Adrenal gland (tissue), 19 donors: ENCODE measurements at regions of chr2 and their contacts with region 1.

Region 1: GRCh38 chr2:68487773-68488355 is 20.5 kb downstream of the APLF start:
- DNase-seq: no peak
- H3K4me3 ChIP-seq: no peak overlapping the region
- H3K27ac ChIP-seq: no peak overlapping the region
- H3K4me1 ChIP-seq: peaks cover 0 to 10% of the 10 kb centered on the region in 2 donors
- H3K27me3 ChIP-seq: no peaks in the 10 kb centered on the region
- CTCF ChIP-seq: peak; percentile 27 to 70 (median 52)
- POLR2A ChIP-seq: no peak

Region 2: DNA sequence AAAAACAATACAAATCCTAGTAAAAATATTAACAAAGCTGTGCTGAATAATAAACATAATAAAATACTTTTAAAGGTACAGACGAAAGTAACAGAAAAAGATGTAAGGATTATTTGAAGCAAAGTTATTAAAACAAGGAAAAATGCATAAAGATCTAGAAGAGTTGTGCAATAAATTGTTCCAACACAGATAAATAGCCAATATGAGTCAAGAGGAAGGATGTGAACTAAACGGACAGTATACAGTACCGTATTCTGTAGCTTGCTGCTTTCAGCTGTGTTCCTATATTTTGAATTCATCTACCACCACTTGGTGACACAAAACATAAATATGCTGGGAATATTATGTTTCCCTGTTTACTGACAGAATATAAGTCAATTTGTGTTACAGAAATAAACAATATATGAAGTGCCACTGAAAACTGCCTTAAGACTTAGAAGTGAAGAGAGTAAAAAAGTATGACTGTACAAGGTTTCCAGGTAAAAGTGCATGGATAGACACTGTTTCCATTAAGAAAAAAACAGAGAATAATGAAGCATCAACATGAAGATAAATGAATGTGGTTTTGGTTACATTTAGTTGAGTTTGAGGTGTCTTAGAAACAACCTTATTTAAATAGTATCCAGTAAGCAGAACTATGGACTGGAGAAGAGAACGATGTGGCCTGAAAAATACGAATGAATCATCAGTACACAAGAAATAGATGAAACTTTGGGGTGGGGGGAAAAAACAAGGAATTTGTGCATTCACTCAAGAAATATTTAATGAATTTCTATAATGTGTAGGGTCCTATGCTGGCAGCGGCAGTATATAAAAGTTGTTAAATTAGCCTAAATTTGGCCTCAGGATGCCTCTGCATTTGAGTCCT is 248.7 kb before region 1 on chr2:
- intact Hi-C with region 1: no loop called
- DNase-seq: no peak
- H3K4me3 ChIP-seq: peak overlapping the region in 1 of 4 donors; percentile 11
- H3K27ac ChIP-seq: peak overlapping the region in 2 of 5 donors; percentile 14 to 15
- H3K4me1 ChIP-seq: peaks cover 32 to 90% of the 10 kb centered on the region in 2 donors
- H3K27me3 ChIP-seq: no peaks in the 10 kb centered on the region
- CTCF ChIP-seq: no peak
- POLR2A ChIP-seq: no peak

Region 3: GRCh38 chr2:68250652-68251186 is 237.1 kb before region 1 on chr2:
- intact Hi-C with region 1: no loop called
- DNase-seq: no peak
- H3K4me3 ChIP-seq: peak overlapping the region in 2 of 4 donors; percentile 44 to 96
- H3K27ac ChIP-seq: peak overlapping the region; percentile 85 to 100 (median 96)
- H3K4me1 ChIP-seq: peaks cover 32 to 61% of the 10 kb centered on the region in 2 donors
- H3K27me3 ChIP-seq: no peaks in the 10 kb centered on the region
- CTCF ChIP-seq: no peak
- POLR2A ChIP-seq: no peak

Region 4: DNA sequence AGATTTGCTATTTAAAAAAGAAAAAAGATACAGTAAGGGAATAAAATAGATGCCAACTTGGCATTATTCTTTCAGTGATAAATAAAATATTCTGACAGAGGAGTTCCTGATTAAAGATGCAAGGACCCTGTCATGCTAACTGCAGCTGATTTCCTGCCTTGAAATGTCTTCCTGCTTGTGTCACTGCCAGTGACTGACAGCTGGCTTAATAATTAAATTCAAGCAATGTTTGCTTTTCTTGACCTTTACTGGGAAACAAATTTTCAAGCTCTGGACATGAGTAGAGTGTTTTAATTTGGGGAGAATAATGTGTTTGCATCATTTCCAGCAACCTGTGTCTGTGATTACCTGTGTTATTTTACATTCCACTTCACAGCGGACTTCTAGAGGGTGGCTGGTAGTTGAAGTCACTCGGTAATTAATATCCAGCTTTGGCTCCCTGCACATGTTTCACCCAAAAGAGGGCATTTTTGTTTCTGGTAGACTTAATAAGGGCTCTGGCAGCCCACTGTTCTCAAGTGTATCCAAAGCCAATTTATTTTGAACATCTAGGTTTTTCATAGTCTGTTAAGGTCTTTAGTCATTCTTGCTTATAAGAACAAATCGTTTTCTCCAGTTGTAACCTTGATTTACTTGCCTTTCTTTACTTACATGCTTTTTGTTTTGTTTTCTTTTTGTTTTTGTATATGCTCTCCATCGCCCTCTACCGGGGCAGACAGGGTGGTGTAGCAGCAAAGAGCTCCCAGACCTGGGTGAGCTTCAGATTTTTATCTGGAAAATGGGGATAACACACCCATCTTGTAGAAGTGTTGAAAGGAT is 107.0 kb after region 1 on chr2:
- intact Hi-C with region 1: loop called in 1 of 2 experiments (anchors 10 kb)
- DNase-seq: peak; percentile 53 to 82 (median 63)
- H3K4me3 ChIP-seq: peak overlapping the region in 1 of 4 donors; percentile 52
- H3K27ac ChIP-seq: peak overlapping the region in 1 of 5 donors; percentile 6
- H3K4me1 ChIP-seq: peaks cover 0 to 7% of the 10 kb centered on the region in 2 donors
- H3K27me3 ChIP-seq: no peaks in the 10 kb centered on the region
- CTCF ChIP-seq: peak; percentile 51 to 87 (median 79)
- POLR2A ChIP-seq: no peak

Region 5: DNA sequence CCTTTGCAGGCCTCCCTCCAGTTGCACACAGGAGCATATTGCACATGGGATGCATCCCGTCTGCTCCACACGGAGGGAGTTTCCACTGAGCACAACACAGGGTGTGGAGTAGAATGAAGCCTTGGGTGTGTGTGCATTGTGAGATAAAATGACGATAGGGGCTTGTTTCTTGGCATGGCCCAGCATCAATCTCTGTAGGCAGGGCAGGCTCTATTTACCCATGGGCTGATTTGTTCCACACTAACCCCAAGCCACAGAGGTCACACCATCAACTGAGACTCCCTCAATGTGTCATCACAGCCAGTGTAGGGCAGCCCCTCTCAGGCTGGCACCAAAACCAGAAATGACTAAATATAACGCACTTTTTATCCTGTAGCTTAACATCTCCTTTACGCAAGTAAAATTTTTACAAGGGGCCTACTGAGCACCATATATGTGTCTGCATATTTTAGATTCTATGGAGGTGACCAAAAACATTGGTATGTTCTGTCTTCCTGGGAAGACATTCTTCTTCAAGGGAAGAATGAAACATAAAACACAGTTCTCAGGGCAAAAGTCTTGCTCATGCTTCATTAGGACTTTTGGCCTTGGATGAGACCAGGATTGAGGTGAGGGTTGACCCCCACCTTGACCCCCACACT is 483.8 kb after region 1 on chr2:
- intact Hi-C with region 1: no loop called
- DNase-seq: no peak
- H3K4me3 ChIP-seq: no peak overlapping the region
- H3K27ac ChIP-seq: no peak overlapping the region
- H3K4me1 ChIP-seq: no peaks in the 10 kb centered on the region
- H3K27me3 ChIP-seq: no peaks in the 10 kb centered on the region
- CTCF ChIP-seq: no peak
- POLR2A ChIP-seq: no peak